ENCODE measurements at regions of chr19 and their contacts with region 1.

Region 1: GRCh38 chr19:2032296-2032941 is 16.9 kb upstream of the BTBD2 start:
- DNase-seq: peak; percentile 92
- H3K4me3 ChIP-seq: no peak overlapping the region
- H3K27ac ChIP-seq: peak overlapping the region; percentile 86
- H3K4me1 ChIP-seq: peaks cover 16% of the 10 kb centered on the region
- H3K27me3 ChIP-seq: no peaks in the 10 kb centered on the region
- CTCF ChIP-seq: no peak

Region 2: DNA sequence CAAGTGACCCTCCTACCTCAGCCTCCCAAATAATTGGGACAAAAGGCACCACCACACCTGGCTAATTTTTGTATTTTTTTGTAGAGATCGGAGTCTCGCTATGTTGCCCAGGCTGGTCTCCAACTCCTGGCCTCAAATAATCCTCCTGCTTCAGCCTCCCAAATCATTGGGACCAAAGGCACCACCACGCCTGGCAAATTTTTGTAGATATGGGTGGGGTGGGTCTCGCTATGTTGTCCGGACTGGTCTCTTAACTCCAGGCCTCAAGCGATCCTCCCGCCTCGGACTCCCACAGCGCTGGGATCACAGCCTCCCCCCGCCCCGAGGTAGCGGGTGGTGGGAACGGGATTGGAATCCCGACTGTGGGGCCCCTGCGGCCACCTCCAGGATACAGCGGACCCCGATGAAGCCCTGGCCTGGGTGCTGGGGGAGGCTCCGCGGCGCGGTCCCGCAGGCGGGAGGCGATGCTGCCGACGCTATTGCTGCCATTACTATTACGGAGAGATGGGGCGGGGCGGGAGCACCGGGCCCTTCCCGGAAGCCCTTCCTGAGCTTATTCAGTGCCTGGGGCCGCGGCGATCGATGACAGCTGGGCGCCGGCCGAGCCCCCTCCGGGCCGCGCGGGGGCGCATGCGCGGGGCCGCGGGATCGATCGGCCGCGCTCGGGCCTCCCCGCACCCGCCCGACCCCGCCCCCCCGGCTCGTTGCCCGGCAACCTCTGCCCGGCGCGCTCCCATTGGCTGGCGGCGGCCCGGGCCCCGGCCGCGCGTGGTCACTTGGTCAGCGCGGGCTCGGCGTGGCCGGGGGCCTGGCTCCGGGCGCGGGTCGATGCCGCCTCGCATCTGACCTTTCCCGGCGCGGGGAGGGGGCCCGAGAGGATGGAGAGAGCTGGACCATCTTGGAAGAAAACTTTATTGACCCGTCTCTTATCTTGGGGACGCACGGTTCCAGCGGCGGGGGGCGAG is 307.0 kb before region 1 on chr19:
- CTCF ChIA-PET with region 1: no interaction called
- POLR2A ChIA-PET with region 1: interaction called, 10 read pairs
- intact Hi-C with region 1: no loop called
- DNase-seq: peak; percentile 64
- H3K4me3 ChIP-seq: peak overlapping the region; percentile 42
- H3K27ac ChIP-seq: no peak overlapping the region
- H3K4me1 ChIP-seq: no peaks in the 10 kb centered on the region
- H3K27me3 ChIP-seq: peaks cover 28% of the 10 kb centered on the region
- CTCF ChIP-seq: no peak

Region 3: DNA sequence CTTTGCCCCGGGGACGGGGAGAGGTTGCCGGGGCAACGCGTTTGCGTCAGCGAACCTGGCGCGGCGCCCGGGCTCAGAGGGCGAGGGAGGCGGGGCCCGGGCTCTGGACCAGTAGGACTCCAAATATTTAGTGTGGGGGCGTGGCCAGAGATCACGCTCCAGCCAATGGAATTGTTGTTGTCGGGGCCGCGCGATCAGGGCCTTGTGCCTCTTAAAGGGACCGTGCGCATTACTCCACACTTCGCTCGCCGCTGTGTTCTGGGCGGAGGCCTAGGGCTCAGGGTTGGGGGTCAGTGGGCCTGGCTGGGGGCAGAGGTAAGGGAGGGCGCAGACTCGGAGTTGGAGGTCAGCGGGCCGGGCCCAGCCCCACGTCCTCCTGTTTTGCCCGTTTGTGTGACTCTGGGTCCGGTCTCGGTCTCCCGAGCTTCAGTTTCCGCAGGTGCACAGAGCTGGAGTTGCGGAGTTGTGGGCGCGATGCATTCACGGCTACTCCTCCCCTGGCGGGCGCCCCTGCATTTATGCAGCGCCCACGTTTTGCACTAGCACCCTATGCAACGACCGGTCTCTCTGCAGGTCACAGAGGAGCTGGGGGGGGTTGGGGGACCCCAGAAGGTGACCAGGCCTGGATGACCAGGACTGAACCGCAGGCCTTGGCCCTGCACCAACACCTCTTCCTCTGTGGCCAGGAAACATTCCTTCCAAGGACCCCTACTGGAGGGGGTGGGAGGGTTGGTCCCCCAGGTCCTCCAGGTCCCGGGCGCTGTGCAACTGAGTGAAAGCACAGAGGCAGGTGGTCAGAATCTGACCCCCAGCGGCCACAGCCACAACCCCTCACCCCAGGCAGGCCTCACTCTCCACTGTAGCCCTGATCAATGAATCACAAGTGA is 29.3 kb after region 1 on chr19:
- CTCF ChIA-PET with region 1: no interaction called
- POLR2A ChIA-PET with region 1: no interaction called
- intact Hi-C with region 1: loop called (anchors 2 kb)
- DNase-seq: peak; percentile 99
- H3K4me3 ChIP-seq: peak overlapping the region; percentile 66
- H3K27ac ChIP-seq: peak overlapping the region; percentile 99
- H3K4me1 ChIP-seq: peaks cover 25% of the 10 kb centered on the region
- H3K27me3 ChIP-seq: no peaks in the 10 kb centered on the region
- CTCF ChIP-seq: no peak

Region 4: DNA sequence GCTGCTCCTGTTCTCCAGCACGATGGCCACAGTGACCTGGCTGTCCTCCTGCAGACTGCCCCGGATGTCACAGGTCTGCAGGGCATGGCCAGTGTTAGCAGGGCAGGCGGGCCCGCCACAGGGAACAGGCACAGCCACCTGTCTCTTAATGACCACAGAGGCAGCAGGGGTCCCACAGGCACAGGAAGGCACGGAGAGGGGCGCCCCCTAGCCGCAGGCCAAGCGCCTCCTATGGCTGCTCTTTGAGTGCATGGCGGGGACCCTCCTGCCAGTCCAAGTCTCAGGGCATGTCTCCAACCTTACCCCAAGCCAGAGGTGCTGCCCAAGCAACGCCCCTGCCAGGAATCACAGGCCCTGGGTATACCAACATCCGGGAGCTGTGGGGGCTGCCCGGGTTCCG is 78.4 kb after region 1 on chr19:
- CTCF ChIA-PET with region 1: no interaction called
- POLR2A ChIA-PET with region 1: no interaction called
- intact Hi-C with region 1: no loop called
- DNase-seq: no peak
- H3K4me3 ChIP-seq: no peak overlapping the region
- H3K27ac ChIP-seq: no peak overlapping the region
- H3K4me1 ChIP-seq: no peaks in the 10 kb centered on the region
- H3K27me3 ChIP-seq: no peaks in the 10 kb centered on the region
- CTCF ChIP-seq: 0 out of 2 replicates have a peak, but pooled peaks have one; percentile 22

Region 5: GRCh38 chr19:2135474-2136402 is 103.3 kb after region 1 on chr19:
- CTCF ChIA-PET with region 1: no interaction called
- POLR2A ChIA-PET with region 1: no interaction called
- intact Hi-C with region 1: no loop called
- DNase-seq: no peak
- H3K4me3 ChIP-seq: no peak overlapping the region
- H3K27ac ChIP-seq: no peak overlapping the region
- H3K4me1 ChIP-seq: no peaks in the 10 kb centered on the region
- H3K27me3 ChIP-seq: no peaks in the 10 kb centered on the region
- CTCF ChIP-seq: no peak

Region 6: DNA sequence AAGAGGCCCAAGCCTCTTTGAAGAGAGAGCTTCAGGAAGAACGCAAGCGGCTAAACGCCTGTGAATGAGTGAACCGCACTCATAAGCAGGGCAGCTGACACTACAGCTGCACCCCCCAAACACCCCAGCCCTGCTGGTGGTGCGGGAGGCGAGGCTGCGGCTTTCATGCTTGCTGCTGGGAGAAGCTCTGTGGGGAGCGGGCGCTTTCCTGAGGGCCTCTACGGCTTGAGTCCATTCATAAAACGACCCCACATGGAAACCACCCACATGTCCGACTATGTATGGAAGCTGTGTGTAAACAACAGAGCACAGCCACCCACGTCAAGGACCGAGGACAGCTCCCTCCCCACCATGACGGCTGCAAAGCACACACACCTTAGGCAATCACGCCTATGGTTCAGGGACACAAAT is 113.4 kb after region 1 on chr19:
- CTCF ChIA-PET with region 1: no interaction called
- POLR2A ChIA-PET with region 1: no interaction called
- intact Hi-C with region 1: no loop called
- DNase-seq: no peak
- H3K4me3 ChIP-seq: no peak overlapping the region
- H3K27ac ChIP-seq: no peak overlapping the region
- H3K4me1 ChIP-seq: peaks cover 17% of the 10 kb centered on the region
- H3K27me3 ChIP-seq: no peaks in the 10 kb centered on the region
- CTCF ChIP-seq: no peak

Region 7: GRCh38 chr19:3995627-3996026 is 1963.2 kb after region 1 on chr19:
- CTCF ChIA-PET with region 1: no interaction called
- POLR2A ChIA-PET with region 1: interaction called, 13 read pairs
- intact Hi-C with region 1: no loop called
- DNase-seq: no peak
- H3K4me3 ChIP-seq: no peak overlapping the region
- H3K27ac ChIP-seq: no peak overlapping the region
- H3K4me1 ChIP-seq: no peaks in the 10 kb centered on the region
- H3K27me3 ChIP-seq: no peaks in the 10 kb centered on the region
- CTCF ChIP-seq: no peak